Transverse colon (tissue), 4 donors: ENCODE measurements at regions of chr5 and their contacts with region 1.

Region 1: DNA sequence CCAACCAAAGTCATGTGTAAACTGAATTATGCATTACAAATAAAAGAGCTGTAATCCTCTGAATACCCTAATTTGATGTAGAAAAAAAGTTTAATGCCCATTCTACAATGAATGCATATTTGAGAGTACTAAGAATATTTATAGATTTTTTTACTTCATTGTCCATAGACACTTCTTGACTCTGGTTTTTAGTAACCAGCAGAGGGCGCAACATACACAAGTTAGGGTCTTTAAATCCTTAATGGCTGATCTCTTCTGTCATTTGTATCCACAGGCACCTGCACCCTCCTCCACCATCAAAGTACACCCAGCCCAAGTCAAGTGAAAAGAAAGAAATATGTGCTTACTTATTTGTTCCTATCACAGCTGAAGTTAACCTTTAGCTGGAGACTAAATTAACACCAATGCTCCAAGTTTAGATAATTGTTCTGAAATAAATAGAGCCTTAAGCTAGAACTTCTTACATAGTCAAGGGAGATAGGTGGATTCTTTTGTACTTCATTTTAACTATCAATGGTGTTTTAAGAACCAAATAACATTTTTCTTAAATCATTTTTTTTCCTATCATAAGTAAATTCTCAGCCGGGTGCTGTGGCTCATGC is 524.2 kb upstream of the DAB2 start:
- DNase-seq: peak; percentile 53
- H3K4me3 ChIP-seq: no peak overlapping the region
- H3K27ac ChIP-seq: no peak overlapping the region
- H3K4me1 ChIP-seq: peaks cover 0 to 7% (median 0%) of the 10 kb centered on the region in 4 donors
- H3K27me3 ChIP-seq: no peaks in the 10 kb centered on the region
- CTCF ChIP-seq: peak; percentile 65 to 77 (median 72)
- EP300 ChIP-seq: no peak
- POLR2A ChIP-seq: no peak

Region 2: GRCh38 chr5:39599721-39600431 is 349.1 kb before region 1 on chr5:
- in situ Hi-C with region 1: loop called (anchors 25 kb)
- intact Hi-C with region 1: no loop called
- DNase-seq: no peak
- H3K4me3 ChIP-seq: no peak overlapping the region
- H3K27ac ChIP-seq: no peak overlapping the region
- H3K4me1 ChIP-seq: peaks cover 0 to 11% (median 5%) of the 10 kb centered on the region in 4 donors
- H3K27me3 ChIP-seq: peaks cover 4% of the 10 kb centered on the region
- CTCF ChIP-seq: peak; percentile 52 to 70 (median 58)
- EP300 ChIP-seq: no peak
- POLR2A ChIP-seq: no peak

Region 3: GRCh38 chr5:40688127-40688761 is 739.3 kb after region 1 on chr5:
- in situ Hi-C with region 1: loop called in 3 of 4 experiments (anchors 5 to 10 kb)
- intact Hi-C with region 1: loop called (anchors 5 kb)
- DNase-seq: peak; percentile 90
- H3K4me3 ChIP-seq: peak overlapping the region in 1 of 4 donors; percentile 97
- H3K27ac ChIP-seq: peak overlapping the region; percentile 94 to 96 (median 94)
- H3K4me1 ChIP-seq: peaks cover 0 to 68% (median 28%) of the 10 kb centered on the region in 4 donors
- H3K27me3 ChIP-seq: no peaks in the 10 kb centered on the region
- CTCF ChIP-seq: peak; percentile 78 to 94 (median 89)
- EP300 ChIP-seq: no peak
- POLR2A ChIP-seq: no peak

Region 4: DNA sequence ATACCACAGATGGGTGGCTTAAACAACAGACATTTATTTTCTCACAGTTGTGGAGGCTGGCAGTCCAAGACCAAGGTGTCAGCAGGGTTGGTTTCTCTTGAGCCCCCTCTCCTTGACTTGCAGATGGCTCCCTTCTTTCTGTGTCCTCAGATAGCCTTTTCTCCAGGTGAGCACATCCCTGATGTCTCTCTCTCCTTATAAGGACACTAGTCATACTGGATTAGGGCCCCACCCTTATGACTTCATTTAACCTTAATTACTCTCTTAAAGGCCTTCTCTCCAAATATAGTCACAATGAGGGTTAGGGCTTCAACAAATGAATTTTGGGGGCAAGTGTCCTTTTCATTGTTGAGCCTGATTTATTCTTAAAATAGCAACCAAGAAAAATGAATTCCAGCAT is 745.5 kb after region 1 on chr5:
- in situ Hi-C with region 1: loop called in 3 of 4 experiments (anchors 5 to 10 kb)
- intact Hi-C with region 1: loop called (anchors 5 kb)
- DNase-seq: no peak
- H3K4me3 ChIP-seq: no peak overlapping the region
- H3K27ac ChIP-seq: no peak overlapping the region
- H3K4me1 ChIP-seq: peaks cover 0 to 10% (median 6%) of the 10 kb centered on the region in 4 donors
- H3K27me3 ChIP-seq: no peaks in the 10 kb centered on the region
- CTCF ChIP-seq: no peak
- EP300 ChIP-seq: no peak
- POLR2A ChIP-seq: no peak

Region 5: GRCh38 chr5:40736103-40736875 is 787.3 kb after region 1 on chr5:
- in situ Hi-C with region 1: loop called in 1 of 4 experiments (anchors 25 kb)
- intact Hi-C with region 1: no loop called
- DNase-seq: no peak
- H3K4me3 ChIP-seq: no peak overlapping the region
- H3K27ac ChIP-seq: peak overlapping the region in 2 of 4 donors; percentile 61 to 76
- H3K4me1 ChIP-seq: peaks cover 22 to 48% (median 31%) of the 10 kb centered on the region in 4 donors
- H3K27me3 ChIP-seq: no peaks in the 10 kb centered on the region
- CTCF ChIP-seq: peak; percentile 70 to 83 (median 73)
- EP300 ChIP-seq: no peak
- POLR2A ChIP-seq: no peak

Region 6: GRCh38 chr5:40879163-40879942 is 930.4 kb after region 1 on chr5:
- in situ Hi-C with region 1: loop called in 3 of 4 experiments (anchors 25 kb)
- intact Hi-C with region 1: no loop called
- DNase-seq: no peak
- H3K4me3 ChIP-seq: no peak overlapping the region
- H3K27ac ChIP-seq: no peak overlapping the region
- H3K4me1 ChIP-seq: peaks cover 0 to 6% (median 2%) of the 10 kb centered on the region in 4 donors
- H3K27me3 ChIP-seq: no peaks in the 10 kb centered on the region
- CTCF ChIP-seq: peak; percentile 55 to 70 (median 63)
- EP300 ChIP-seq: no peak
- POLR2A ChIP-seq: no peak